IMR-90 (cell line): ENCODE measurements at regions of chr18 and their contacts with region 1.

Region 1: GRCh38 chr18:55214969-55215368 is 255.7 kb upstream of the CCDC68 start:
- DNase-seq: no peak
- ATAC-seq: no peak
- H3K4me3 ChIP-seq: no peak overlapping the region
- H3K27ac ChIP-seq: no peak overlapping the region
- H3K4me1 ChIP-seq: no peaks in the 10 kb centered on the region
- H3K27me3 ChIP-seq: peaks cover 17% of the 10 kb centered on the region
- CTCF ChIP-seq: no peak
- POLR2A ChIP-seq: no peak
- RAD21 ChIP-seq: no peak

Region 2: DNA sequence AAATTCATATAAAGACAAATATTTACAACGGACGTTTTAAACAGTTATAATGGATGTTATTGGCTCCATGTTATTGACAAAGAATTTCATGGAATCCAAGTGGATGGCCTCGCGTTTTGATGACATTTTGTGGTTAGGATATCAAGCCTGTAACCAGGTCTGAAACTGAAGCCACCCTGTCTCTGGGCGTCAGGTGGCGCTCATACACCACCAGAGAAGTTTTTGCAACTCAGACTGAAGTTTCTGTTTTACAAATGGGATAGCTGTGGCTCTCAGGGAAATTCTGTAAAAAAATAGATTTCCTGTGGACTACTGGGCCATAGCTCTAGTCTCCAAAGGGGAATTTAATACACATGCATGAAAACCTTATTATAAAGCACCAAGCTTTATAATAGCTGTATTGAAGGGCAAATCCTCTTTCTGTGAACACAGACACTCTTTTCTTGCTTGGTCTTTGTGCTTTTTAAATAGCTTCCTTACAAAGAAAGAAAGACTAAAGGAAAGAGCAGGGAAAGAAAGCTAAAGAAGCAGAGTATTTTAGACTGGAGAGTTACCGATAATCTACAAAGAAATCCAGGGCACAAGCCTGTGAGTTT is 770.6 kb before region 1 on chr18:
- CTCF ChIA-PET with region 1: no interaction called
- POLR2A ChIA-PET with region 1: no interaction called
- dilution Hi-C with region 1: no loop called
- in situ Hi-C with region 1: loop called (anchors 25 kb)
- intact Hi-C with region 1: loop called (anchors 10 kb)
- DNase-seq: peak; percentile 61
- ATAC-seq: peak; percentile 94
- H3K4me3 ChIP-seq: no peak overlapping the region
- H3K27ac ChIP-seq: no peak overlapping the region
- H3K4me1 ChIP-seq: no peaks in the 10 kb centered on the region
- H3K27me3 ChIP-seq: peaks cover 2% of the 10 kb centered on the region
- CTCF ChIP-seq: peak; percentile 73
- POLR2A ChIP-seq: no peak
- RAD21 ChIP-seq: peak; percentile 75

Region 3: DNA sequence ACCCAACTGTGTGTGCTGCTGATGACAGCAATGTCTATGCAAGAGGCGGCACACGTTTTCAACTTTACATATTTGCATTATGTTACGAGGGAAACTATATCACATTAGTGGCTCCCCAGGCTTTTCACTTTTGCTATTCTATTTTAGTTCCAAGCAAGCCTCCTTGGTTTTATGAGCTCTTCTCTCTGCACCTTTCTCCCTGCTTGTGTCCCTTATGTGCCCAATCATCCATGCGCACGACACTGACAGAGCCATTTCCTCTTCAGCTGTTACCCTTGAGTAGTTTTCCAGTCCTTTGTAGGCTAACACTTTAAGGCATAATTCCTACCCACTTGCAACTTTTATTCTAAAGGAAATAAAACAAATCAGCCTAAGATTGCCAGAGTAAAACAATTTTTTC is 218.7 kb after region 1 on chr18:
- CTCF ChIA-PET with region 1: no interaction called
- POLR2A ChIA-PET with region 1: no interaction called
- dilution Hi-C with region 1: no loop called
- in situ Hi-C with region 1: no loop called
- intact Hi-C with region 1: no loop called
- DNase-seq: no peak
- ATAC-seq: no peak
- H3K4me3 ChIP-seq: no peak overlapping the region
- H3K27ac ChIP-seq: no peak overlapping the region
- H3K4me1 ChIP-seq: peaks cover 6% of the 10 kb centered on the region
- H3K27me3 ChIP-seq: no peaks in the 10 kb centered on the region
- CTCF ChIP-seq: no peak
- POLR2A ChIP-seq: no peak
- RAD21 ChIP-seq: no peak